ENCODE measurements at regions of chr19 and their contacts with region 1.

Region 1: GRCh38 chr19:35468637-35469036 is 20.6 kb downstream of the FFAR2 start:
- DNase-seq: peak; percentile 80
- H3K4me3 Mint-ChIP-seq: no peak overlapping the region
- H3K27ac Mint-ChIP-seq: no peak overlapping the region
- H3K4me1 Mint-ChIP-seq: peaks cover 13% of the 10 kb centered on the region
- H3K27me3 Mint-ChIP-seq: peaks cover 23% of the 10 kb centered on the region

Region 2: GRCh38 chr19:35484252-35485036 is 15.8 kb after region 1 on chr19:
- CTCF ChIA-PET with region 1: no interaction called
- DNase-seq: no peak
- H3K4me3 Mint-ChIP-seq: no peak overlapping the region
- H3K27ac Mint-ChIP-seq: no peak overlapping the region
- H3K4me1 Mint-ChIP-seq: peaks cover 3% of the 10 kb centered on the region
- H3K27me3 Mint-ChIP-seq: peaks cover 27% of the 10 kb centered on the region

Region 3: DNA sequence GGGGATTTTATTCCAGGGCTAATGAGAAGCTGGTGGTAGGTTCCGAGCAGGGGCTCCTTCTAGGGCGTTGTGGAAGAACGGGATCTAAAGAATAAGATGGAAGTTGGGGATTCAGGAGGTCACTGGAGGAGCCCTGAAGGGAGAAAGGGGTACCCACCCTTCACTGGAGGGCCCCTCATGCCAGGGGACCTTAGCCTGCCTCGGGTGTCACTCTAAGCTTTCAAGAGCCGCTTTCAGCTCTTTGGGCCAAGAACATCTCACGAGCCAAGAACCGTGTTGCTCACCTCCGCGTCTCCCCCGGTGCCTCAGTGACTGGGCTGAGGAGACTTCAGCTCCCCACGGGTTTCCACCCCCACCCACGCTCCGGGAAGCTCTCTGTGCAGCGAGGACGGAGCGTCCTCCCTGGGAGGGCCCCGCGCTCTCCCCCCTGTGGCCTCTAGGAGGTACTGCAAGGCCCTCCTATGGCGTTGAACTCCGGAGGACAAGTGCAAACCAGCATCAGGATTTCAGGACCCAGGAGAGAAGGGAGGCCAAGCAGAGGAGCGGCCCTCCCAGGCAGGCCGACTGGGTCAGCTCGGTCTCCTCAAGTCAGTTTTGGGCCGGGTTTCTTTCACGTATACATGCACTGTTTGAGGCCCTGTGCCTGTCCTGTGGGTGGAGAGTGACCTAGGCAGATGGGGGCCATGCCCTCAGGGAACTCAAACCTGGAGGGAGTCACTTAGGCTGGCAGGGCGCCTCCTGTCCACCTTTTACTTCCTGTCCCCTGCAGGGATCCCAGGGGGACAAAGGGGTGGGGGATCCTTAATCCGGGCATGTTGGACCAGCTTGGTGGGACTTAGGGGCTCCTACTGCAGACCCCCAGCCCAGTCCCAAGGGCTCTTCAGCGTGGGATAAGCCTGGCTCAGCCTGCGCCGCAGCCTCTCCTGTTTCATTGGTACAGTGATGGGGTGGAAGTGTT is 26.7 kb after region 1 on chr19:
- CTCF ChIA-PET with region 1: interaction called, 16 read pairs
- DNase-seq: peak; percentile 74
- H3K4me3 Mint-ChIP-seq: no peak overlapping the region
- H3K27ac Mint-ChIP-seq: no peak overlapping the region
- H3K4me1 Mint-ChIP-seq: peaks cover 8% of the 10 kb centered on the region
- H3K27me3 Mint-ChIP-seq: peaks cover 56% of the 10 kb centered on the region

Region 4: DNA sequence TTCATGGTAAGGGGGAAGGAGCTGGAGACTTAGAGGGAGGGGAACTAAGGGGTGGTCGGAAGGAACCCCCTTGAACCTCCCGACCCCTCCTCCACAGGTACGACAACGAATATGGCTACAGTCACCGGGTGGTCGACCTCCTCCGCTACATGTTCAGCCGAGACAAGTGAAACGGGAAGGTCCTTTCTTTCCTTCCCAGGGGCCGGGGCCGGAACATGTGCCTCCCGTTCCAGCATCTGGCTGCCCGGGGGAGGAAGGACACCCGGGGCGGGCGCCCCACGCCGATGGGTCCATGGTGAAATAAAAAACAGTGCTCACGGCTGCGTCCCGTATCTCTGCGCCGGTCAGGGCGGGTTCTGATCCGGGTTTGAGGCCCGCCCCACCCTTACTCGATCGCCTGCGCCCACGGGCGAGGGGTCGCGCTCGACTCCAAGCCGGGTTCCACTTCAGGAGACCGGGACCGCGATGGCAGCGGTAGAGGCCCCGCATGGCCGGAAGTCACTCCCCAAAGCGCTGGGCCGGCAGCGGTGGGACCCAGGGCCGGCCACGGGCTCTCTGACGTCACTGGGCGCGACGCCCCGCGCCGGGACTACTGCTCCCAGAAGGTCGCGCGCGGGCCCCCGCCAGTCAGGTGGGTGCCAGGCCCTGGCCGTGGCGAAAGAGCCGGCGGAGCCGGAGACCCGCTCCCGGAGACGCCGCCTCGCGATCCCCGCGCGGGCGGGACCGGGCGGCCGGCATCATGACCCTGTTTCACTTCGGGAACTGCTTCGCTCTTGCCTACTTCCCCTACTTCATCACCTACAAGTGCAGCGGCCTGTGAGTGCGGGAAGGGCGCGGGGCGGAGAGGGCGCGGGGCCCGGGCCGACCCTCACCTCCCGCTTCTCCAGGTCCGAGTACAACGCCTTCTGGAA is 76.6 kb after region 1 on chr19 and contains the start of gene TMEM147:
- CTCF ChIA-PET with region 1: no interaction called
- DNase-seq: peak; percentile 90
- H3K4me3 Mint-ChIP-seq: peak within 1 kb of the TSS; percentile 87
- H3K27ac Mint-ChIP-seq: peak within 1 kb of the TSS; percentile 86
- H3K4me1 Mint-ChIP-seq: peaks cover 36% of the 10 kb centered on the region
- H3K27me3 Mint-ChIP-seq: no peaks in the 10 kb centered on the region